CD8-positive, alpha-beta T cell (primary cell): ENCODE measurements at regions of chr3 and their contacts with region 1.

Region 1: GRCh38 chr3:66394019-66394752 is 106.6 kb downstream of the LRIG1 start:
- DNase-seq: peak; percentile 32 to 84 (median 60)
- ATAC-seq: peak; percentile 93
- H3K4me3 ChIP-seq: peak overlapping the region; percentile 16 to 35
- H3K4me3 Mint-ChIP-seq: peak overlapping the region; percentile 85
- H3K27ac ChIP-seq: peak overlapping the region; percentile 57 to 72
- H3K27ac Mint-ChIP-seq: peak overlapping the region; percentile 95
- H3K4me1 ChIP-seq: peaks cover 24% of the 10 kb centered on the region
- H3K4me1 Mint-ChIP-seq: peaks cover 56% of the 10 kb centered on the region
- H3K27me3 ChIP-seq: no peaks in the 10 kb centered on the region
- H3K27me3 Mint-ChIP-seq: no peaks in the 10 kb centered on the region
- CTCF ChIP-seq: no peak

Region 2: DNA sequence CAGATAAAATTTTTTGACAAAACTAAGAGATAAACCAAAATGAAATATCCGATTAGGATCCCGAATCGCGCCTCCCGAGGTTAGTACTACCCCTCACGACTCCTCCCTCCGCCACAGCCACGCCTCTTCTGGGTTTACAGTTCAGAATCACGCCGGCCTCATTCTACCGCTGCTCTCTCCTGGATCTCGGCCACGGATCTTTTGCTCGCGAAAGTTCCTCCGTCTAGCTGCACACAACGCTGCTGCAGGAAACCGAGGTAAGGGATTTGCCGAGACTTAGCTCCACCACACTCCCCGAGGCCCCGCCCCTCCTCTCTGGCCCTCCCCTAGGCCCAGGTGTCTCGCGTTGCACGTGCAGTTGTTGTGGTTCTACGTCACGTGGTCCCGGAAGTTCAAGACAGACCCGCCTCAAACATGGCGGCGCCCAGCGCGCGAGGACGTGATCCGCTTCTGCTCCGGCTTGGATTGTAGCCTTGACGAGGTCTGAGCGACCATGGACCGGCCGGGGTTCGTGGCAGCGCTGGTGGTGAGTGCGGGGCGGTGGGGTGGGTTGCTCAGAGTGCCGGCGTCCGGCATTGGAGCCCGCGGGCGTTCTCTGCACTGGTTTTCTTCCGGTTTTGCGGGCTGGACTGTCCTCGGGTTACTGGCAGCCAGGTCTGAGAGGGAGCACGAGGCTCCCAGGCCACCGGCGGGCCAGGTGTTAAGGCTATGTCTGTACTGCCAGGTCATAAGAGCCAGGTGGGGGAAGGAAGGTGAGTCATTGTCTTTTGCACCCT is 173.4 kb before region 1 on chr3 and contains the start of gene SLC25A26:
- CTCF ChIA-PET with region 1: no interaction called
- POLR2A ChIA-PET with region 1: interaction called, 3 read pairs
- intact Hi-C with region 1: loop called in 1 of 2 experiments (anchors 5 kb)
- DNase-seq: peak; percentile 94 to 99 (median 97)
- ATAC-seq: peak; percentile 98
- H3K4me3 ChIP-seq: peak within 1 kb of the TSS; percentile 73 to 91
- H3K4me3 Mint-ChIP-seq: peak within 1 kb of the TSS; percentile 90
- H3K27ac ChIP-seq: peak within 1 kb of the TSS; percentile 58 to 82
- H3K27ac Mint-ChIP-seq: peak within 1 kb of the TSS; percentile 90
- H3K4me1 ChIP-seq: peaks cover 14% of the 10 kb centered on the region
- H3K4me1 Mint-ChIP-seq: peaks cover 35% of the 10 kb centered on the region
- H3K27me3 ChIP-seq: no peaks in the 10 kb centered on the region
- H3K27me3 Mint-ChIP-seq: peaks cover 3% of the 10 kb centered on the region
- CTCF ChIP-seq: no peak
- total RNA-seq, gene SLC25A26: 32.0 to 37.4 TPM

Region 3: GRCh38 chr3:66302288-66302687 is 91.9 kb before region 1 on chr3:
- CTCF ChIA-PET with region 1: no interaction called
- POLR2A ChIA-PET with region 1: interaction called, 6 read pairs
- intact Hi-C with region 1: loop called in 1 of 2 experiments (anchors 5 kb)
- DNase-seq: peak in 7 of 9 experiments; percentile 37 to 90 (median 55)
- ATAC-seq: peak; percentile 68
- H3K4me3 ChIP-seq: no peak overlapping the region
- H3K4me3 Mint-ChIP-seq: peak overlapping the region; percentile 10
- H3K27ac ChIP-seq: peak overlapping the region; percentile 69 to 97
- H3K27ac Mint-ChIP-seq: peak overlapping the region; percentile 95
- H3K4me1 ChIP-seq: peaks cover 55% of the 10 kb centered on the region
- H3K4me1 Mint-ChIP-seq: peaks cover 81% of the 10 kb centered on the region
- H3K27me3 ChIP-seq: no peaks in the 10 kb centered on the region
- H3K27me3 Mint-ChIP-seq: no peaks in the 10 kb centered on the region
- CTCF ChIP-seq: no peak

Region 4: GRCh38 chr3:66378256-66378823 is 15.8 kb before region 1 on chr3:
- CTCF ChIA-PET with region 1: interaction called, 21 read pairs
- POLR2A ChIA-PET with region 1: interaction called, 5 read pairs
- intact Hi-C with region 1: no loop called
- DNase-seq: peak in 7 of 9 experiments; percentile 15 to 67 (median 46)
- ATAC-seq: peak; percentile 61
- H3K4me3 ChIP-seq: no peak overlapping the region
- H3K4me3 Mint-ChIP-seq: no peak overlapping the region
- H3K27ac ChIP-seq: peak overlapping the region in 1 of 2 experiments; percentile 37
- H3K27ac Mint-ChIP-seq: peak overlapping the region; percentile 86
- H3K4me1 ChIP-seq: no peaks in the 10 kb centered on the region
- H3K4me1 Mint-ChIP-seq: peaks cover 7% of the 10 kb centered on the region
- H3K27me3 ChIP-seq: no peaks in the 10 kb centered on the region
- H3K27me3 Mint-ChIP-seq: no peaks in the 10 kb centered on the region
- CTCF ChIP-seq: peak; percentile 56